Right ventricle myocardium inferior (tissue), 1 donor: ENCODE measurements at regions of chr3 and their contacts with region 1.

Region 1: DNA sequence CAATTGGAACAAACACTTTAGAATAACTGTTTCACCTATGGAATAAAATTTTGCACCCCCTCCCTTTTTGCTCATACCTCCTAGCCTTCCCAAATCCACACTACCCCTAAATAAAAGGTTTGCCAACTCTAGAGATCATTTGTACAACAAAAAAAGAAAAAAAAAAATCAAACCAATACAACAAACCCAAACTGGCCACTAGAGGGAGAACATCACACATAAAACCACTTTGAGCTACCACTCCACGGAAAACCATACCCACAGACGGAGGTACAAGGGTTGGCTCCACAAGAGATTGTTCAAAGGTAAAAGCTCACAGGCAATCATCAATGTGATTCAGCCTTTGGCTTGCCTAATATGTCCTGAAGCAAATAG is 47.6 kb downstream of the SETMAR start:
- DNase-seq: no peak
- ATAC-seq: peak; percentile 84

Region 2: DNA sequence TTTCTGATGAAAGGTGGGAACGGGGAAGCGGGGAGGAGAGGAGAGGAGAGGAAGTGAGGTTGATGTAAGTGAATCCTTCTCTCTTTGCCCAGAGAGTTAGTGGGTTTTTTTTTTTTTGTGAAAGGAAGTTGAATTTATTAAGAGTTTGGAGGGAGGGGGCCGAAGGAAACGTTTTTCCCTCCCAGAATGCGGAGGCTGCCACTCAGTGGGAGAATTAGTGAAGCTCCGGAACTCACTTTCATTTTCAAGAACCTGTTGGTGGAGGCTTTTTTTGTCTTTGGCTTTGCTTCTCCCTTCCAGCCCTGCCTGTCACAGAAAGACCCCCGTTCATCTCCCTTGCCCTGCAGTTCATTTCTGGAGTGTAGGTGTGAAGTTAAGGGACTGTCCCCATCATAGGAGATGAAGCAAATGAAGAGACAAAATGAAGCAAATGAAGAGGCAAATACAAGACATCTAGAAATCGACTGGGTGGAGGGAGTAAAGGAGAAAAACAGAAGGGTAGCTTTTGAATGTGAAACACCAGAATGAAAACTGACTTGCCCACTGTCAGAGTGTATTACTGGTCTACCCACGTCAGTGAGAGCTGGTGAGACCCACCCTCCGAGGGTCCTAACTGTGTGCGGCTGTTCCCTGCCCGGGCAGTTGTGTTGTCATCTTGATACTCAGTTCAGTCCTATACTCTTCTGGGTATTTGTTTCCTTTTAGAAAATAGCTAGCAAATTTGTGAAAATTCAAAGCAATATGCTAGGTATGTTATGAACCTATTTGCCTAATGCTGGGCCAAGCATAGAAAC is 233.9 kb after region 1 on chr3:
- intact Hi-C with region 1: loop called (anchors 5 kb)
- DNase-seq: no peak
- ATAC-seq: peak; percentile 12

Region 3: GRCh38 chr3:4633078-4634004 is 282.6 kb after region 1 on chr3:
- intact Hi-C with region 1: loop called (anchors 1 kb)
- DNase-seq: no peak
- ATAC-seq: peak; percentile 61